MCF 10A (cell line): ENCODE measurements at regions of chrX and their contacts with region 1.

Region 1: GRCh38 chrX:48021026-48021900 is 14.5 kb downstream of the SPACA5 start:
- DNase-seq: peak; percentile 73
- H3K4me3 Mint-ChIP-seq: peak overlapping the region; percentile 89
- H3K27ac Mint-ChIP-seq: peak overlapping the region; percentile 96
- H3K4me1 Mint-ChIP-seq: peaks cover 5% of the 10 kb centered on the region
- H3K27me3 Mint-ChIP-seq: no peaks in the 10 kb centered on the region
- CTCF ChIP-seq: no peak

Region 2: DNA sequence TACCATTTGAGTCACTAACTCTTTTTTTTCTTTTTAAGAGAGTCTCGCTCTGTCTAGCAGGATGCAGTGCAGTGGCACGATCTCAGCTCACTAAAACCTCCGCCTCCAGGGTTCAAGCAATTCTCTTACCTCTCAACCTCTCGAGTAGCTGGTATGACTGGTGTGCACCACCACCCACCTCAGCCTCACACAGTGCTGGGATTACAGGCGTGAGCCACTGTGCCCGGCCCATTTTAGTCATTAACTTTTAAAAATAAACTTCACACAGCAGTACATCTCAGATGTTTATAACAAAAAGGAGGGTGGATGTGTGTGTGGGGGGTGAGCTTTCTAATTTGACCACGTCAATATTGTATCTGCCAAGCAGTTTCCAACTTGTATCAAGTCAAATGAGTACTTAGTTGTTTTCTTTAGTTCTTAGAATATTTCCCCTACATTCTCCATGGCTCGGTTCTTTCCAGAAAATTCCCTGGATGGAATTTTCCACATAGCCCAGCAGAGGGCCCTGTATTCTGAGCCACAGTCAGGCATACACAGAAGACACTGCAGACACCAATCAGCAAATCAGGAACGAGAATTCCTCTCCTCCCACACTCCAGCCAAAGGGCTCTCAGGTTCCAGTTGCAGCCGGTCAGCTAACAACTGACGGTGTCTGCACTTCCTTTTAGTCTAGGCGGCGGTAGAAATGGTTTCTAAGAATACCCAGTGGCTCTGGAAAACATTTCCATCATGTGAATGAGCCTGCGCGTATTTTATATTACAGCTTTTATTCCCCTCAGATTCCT is 480.3 kb before region 1 on chrX:
- CTCF ChIA-PET with region 1: no interaction called
- POLR2A ChIA-PET with region 1: no interaction called
- intact Hi-C with region 1: loop called (anchors 1 kb)
- DNase-seq: peak; percentile 84
- H3K4me3 Mint-ChIP-seq: no peak overlapping the region
- H3K27ac Mint-ChIP-seq: peak overlapping the region; percentile 23
- H3K4me1 Mint-ChIP-seq: no peaks in the 10 kb centered on the region
- H3K27me3 Mint-ChIP-seq: no peaks in the 10 kb centered on the region
- CTCF ChIP-seq: peak; percentile 47

Region 3: DNA sequence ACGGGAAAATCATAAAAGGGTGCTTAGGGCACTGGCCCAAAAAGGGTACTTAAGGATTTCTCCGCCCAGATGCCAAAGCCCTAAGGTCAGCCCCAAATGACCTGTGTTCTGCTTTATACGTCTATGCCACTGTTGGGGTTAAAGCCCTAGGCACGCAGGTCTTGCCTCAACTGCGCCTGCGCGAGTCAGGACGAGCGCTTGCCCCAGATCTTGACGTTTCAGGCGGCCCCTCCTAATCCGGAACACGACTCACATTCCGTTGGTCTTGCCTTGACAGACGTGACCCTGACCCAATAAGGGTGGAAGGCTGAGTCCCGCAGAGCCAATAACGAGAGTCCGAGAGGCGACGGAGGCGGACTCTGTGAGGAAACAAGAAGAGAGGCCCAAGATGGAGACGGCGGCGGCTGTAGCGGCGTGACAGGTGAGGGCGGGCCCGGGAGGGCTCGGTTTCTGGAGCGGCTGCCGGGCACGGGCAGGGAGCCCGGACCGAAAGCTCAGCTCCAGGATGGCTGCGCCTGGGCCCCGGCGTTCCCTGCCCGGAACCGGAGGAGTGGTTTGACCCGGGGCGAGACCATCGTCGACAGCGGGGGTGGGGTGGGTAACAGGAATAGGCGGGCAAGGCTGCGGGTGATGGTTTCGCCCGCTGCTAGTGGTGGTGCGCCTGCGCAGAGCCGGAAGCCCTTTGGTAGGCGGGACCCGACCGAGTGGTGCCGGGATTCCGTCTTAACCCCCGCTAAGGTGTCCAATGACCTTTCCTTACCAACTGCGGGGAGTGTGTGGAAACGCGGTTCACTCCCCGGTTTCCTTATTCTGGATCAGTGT is 460.2 kb before region 1 on chrX and contains the start of gene ARAF:
- CTCF ChIA-PET with region 1: no interaction called
- POLR2A ChIA-PET with region 1: no interaction called
- intact Hi-C with region 1: loop called (anchors 5 kb)
- DNase-seq: peak; percentile 99
- H3K4me3 Mint-ChIP-seq: peak within 1 kb of the TSS; percentile 96
- H3K27ac Mint-ChIP-seq: peak within 1 kb of the TSS; percentile 99
- H3K4me1 Mint-ChIP-seq: peaks cover 18% of the 10 kb centered on the region
- H3K27me3 Mint-ChIP-seq: no peaks in the 10 kb centered on the region
- CTCF ChIP-seq: no peak
- total RNA-seq, gene ARAF: 53.2 and 63.5 TPM in 2 replicates

Region 4: GRCh38 chrX:47658684-47659515 is 362.4 kb before region 1 on chrX and contains the start of gene UXT:
- CTCF ChIA-PET with region 1: no interaction called
- POLR2A ChIA-PET with region 1: no interaction called
- intact Hi-C with region 1: loop called (anchors 5 kb)
- DNase-seq: peak; percentile 92
- H3K4me3 Mint-ChIP-seq: peak within 1 kb of the TSS; percentile 95
- H3K27ac Mint-ChIP-seq: peak within 1 kb of the TSS; percentile 98
- H3K4me1 Mint-ChIP-seq: peaks cover 12% of the 10 kb centered on the region
- H3K27me3 Mint-ChIP-seq: no peaks in the 10 kb centered on the region
- CTCF ChIP-seq: no peak
- total RNA-seq, gene UXT: 112 and 140 TPM in 2 replicates

Region 5: DNA sequence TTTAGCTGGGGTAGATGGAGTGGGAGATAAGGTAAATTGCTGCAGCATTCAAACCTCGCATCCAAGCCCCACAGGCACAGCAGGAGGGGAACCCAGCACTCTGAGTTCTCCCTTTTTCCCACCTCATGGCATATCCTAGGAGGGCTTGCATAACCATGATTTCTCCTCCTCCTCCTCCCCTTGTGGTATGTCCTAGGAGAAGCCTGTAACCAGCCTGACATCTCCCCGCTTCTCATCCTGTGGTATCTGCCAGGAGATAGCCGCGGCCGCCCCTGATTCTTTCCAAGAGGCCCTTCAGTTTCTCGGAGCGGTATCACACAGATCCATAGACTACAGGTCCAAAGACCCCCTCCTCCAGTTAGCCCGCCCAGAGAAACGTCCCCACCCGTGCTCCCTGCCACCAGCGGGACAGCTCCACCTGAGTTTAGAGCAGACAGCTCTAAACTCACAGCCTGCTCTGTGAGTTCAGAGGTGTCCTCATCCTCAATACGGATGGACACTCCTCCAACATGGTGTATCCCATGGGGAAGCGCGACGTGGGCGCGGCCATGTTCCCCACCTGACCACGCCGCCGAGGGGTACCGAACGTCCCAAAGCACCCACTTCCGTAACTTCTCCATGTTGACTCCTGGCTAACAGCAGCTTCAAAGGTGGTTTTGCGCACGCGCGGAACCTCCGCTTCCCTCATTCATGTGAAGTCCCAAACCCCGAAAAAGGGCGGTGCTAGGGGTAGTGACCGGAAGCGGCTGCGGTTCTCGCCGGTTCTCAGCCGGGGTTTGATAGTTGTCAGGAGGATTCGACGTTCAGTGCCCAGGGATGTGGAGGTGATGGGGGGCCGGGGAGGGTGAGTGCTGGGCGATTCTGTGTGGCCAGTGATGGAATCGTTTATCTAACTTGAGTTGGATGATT is 184.8 kb before region 1 on chrX and contains the start of gene ZNF81:
- CTCF ChIA-PET with region 1: interaction called, 14 read pairs
- POLR2A ChIA-PET with region 1: interaction called, 7 read pairs
- intact Hi-C with region 1: loop called (anchors 1 kb)
- DNase-seq: peak; percentile 95
- H3K4me3 Mint-ChIP-seq: peak within 1 kb of the TSS; percentile 100
- H3K27ac Mint-ChIP-seq: peak within 1 kb of the TSS; percentile 97
- H3K4me1 Mint-ChIP-seq: peaks cover 5% of the 10 kb centered on the region
- H3K27me3 Mint-ChIP-seq: no peaks in the 10 kb centered on the region
- CTCF ChIP-seq: no peak
- total RNA-seq, gene ZNF81: 7.5 and 7.8 TPM in 2 replicates

Region 6: GRCh38 chrX:47991263-47992092 is 29.8 kb before region 1 on chrX:
- CTCF ChIA-PET with region 1: no interaction called
- POLR2A ChIA-PET with region 1: no interaction called
- intact Hi-C with region 1: loop called (anchors 5 kb)
- DNase-seq: peak; percentile 39
- H3K4me3 Mint-ChIP-seq: no peak overlapping the region
- H3K27ac Mint-ChIP-seq: no peak overlapping the region
- H3K4me1 Mint-ChIP-seq: peaks cover 5% of the 10 kb centered on the region
- H3K27me3 Mint-ChIP-seq: no peaks in the 10 kb centered on the region
- CTCF ChIP-seq: no peak

Region 7: GRCh38 chrX:48493890-48494364 is 472.7 kb after region 1 on chrX:
- CTCF ChIA-PET with region 1: no interaction called
- POLR2A ChIA-PET with region 1: no interaction called
- intact Hi-C with region 1: loop called (anchors 5 kb)
- DNase-seq: peak; percentile 57
- H3K4me3 Mint-ChIP-seq: no peak overlapping the region
- H3K27ac Mint-ChIP-seq: no peak overlapping the region
- H3K4me1 Mint-ChIP-seq: peaks cover 26% of the 10 kb centered on the region
- H3K27me3 Mint-ChIP-seq: no peaks in the 10 kb centered on the region
- CTCF ChIP-seq: peak; percentile 33